Thyroid gland (tissue), 4 donors: ENCODE measurements at regions of chr13 and their contacts with region 1.

Region 1: DNA sequence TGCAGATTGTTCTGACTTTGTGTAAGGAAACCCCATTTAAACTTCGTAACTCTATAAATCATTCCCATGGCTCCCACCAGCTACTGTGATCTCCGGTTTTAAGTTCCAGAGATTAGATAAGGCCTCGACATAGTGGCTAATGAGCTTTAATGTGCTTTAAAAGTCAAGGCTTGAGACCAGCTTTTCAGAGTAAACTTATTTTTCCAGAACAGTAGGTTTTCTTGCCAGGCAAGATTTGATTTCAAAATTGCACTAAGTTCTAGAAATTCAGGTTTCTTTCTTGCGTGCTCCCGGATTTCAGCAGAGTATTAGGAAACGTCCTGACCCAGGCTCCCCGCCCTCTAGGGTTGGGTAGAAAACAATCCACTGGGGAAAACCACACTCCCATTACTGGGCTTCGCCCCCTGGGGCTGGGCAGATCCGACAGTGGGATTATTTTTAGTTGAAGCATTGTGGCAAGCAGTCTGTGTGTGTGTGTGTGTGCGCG is 43.3 kb downstream of the CRYL1 start:
- DNase-seq: no peak
- H3K4me3 ChIP-seq: no peak overlapping the region
- H3K27ac ChIP-seq: no peak overlapping the region
- H3K4me1 ChIP-seq: no peaks in the 10 kb centered on the region
- H3K27me3 ChIP-seq: no peaks in the 10 kb centered on the region
- CTCF ChIP-seq: no peak
- POLR2A ChIP-seq: no peak

Region 2: GRCh38 chr13:20192158-20192835 is 290.0 kb before region 1 on chr13:
- intact Hi-C with region 1: loop called (anchors 5 kb)
- DNase-seq: peak; percentile 39 to 40
- H3K4me3 ChIP-seq: peak overlapping the region; percentile 40 to 90 (median 64)
- H3K27ac ChIP-seq: no peak overlapping the region
- H3K4me1 ChIP-seq: peaks cover 5 to 22% of the 10 kb centered on the region in 2 donors
- H3K27me3 ChIP-seq: no peaks in the 10 kb centered on the region
- CTCF ChIP-seq: no peak
- POLR2A ChIP-seq: no peak